RWPE1 (cell line): ENCODE measurements at regions of chr16 and their contacts with region 1.

Region 1: GRCh38 chr16:2838928-2839327 is 8.8 kb downstream of the ZG16B start:
- DNase-seq: peak; percentile 40
- H3K27ac ChIP-seq: peak overlapping the region; percentile 99
- CTCF ChIP-seq: peak; percentile 60

Region 2: DNA sequence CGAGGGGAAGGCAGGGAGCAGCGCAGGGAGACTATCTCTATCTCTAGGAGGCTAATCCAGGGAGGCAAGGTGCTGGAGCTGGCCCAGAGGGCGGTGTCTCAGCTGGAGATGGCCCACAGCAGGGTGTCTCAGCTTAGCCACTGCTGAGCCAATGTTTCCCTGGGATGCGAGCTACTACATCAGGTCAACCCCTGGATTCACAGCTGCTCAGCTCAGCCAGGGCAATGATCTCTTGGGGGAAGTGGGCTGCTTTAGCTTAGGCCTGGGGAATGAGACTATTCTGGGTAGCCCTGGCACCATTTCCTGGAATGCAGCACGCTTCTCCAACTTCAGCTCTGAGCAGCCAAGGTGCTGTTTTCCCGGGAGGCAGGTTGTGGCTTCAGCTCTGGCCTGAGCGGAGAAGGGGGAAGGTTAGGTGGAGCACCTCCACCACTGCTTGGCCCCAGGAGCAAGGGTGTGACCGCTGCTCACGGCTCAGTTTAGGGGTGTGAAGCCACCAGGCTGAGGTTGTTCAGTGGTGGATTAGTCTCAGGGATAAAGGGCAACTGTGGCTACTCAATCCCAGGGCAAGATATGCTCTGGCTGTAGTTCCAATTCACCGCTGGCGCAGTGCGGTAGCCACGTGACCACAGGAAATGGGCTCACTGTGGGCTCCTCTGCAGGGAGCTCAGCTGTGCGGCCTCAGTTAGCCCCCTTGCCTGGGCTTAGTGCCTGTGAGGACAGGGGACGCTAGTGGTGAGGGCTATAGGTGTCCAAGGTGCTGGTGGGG is 27.0 kb before region 1 on chr16:
- CTCF ChIA-PET with region 1: no interaction called
- POLR2A ChIA-PET with region 1: no interaction called
- DNase-seq: no peak
- H3K27ac ChIP-seq: no peak overlapping the region
- CTCF ChIP-seq: no peak

Region 3: DNA sequence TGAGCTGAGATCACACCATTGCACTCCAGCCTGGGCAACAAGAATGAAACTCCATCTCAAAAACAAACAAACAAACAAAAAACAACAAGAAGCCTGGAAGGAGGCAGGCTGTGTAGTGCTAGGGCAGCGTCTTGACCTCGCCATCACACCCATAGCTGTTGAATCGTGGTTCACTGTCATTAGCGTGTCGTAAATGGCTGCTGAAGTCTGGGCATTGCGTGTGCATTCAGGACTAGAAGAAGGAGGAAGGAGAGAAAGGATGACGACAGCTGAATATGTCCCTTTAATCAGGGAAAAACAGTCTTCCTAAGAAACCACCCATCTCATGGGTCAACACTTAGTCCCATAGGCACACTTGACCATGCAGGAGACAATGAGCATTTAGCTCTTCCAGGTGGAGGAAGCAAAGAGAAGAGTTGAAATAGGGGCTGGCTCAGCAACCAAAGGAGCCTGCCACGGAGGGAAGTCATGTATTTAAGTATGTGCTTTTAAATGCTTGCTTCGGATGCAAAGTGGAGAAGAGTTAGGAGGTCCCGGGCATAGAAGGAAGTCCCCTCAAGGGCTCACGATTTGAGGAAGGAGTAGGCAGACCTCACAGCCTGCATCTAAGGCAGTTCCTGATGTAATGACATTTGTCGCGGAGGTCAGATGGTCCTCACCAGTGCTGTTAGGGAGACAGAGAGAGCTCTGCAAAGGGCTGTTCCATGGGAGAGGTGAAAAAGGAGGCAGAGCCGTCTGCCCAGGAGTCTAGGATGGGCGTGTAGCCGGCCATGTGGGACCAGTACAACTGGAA is 10.2 kb after region 1 on chr16:
- CTCF ChIA-PET with region 1: no interaction called
- POLR2A ChIA-PET with region 1: no interaction called
- DNase-seq: no peak
- H3K27ac ChIP-seq: no peak overlapping the region
- CTCF ChIP-seq: no peak

Region 4: DNA sequence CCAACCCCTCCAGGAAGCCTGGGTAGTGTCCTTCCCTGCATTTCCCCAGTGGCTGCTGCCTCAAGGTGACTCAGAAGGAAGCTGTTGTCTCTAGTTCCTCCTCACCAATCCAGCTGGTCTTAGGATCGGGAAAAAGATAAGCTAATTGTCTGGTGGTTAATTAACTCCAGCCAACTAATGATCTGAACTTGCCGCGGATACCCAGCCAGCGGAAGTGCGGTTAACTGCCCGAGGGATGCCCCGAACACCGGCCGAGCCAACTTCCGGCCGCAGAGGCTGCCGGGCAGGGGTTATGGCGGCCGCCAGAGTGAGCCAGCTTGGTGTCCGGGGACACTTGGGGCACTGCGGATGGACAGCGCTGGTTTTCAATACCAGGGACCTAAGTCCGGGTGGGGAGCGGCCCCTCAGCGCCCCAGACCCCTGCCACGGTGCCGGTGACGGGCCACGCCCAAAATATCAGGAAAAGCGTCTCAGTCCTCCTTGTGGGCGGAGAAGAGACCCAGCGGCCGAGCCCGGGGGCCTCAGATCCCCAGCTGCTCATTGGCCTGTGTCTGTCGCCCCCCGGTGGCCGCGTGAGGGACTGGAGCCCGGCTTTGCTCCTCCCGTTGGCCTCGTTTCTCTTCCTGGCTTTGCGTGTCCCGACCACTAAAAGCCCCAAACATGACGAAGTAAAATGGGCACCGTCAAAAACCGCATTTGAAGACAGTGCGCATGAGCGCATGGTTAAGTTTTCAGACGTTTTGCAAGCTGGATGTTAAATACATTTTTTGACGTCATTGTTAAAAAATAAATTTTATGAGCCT is 29.3 kb after region 1 on chr16:
- CTCF ChIA-PET with region 1: interaction called, 19 read pairs
- POLR2A ChIA-PET with region 1: interaction called, 3 read pairs
- DNase-seq: peak; percentile 94
- H3K27ac ChIP-seq: peak overlapping the region; percentile 96
- CTCF ChIP-seq: peak; percentile 96